CD8-positive, alpha-beta T cell (primary cell): ENCODE measurements at regions of chr1 and their contacts with region 1.

Region 1: DNA sequence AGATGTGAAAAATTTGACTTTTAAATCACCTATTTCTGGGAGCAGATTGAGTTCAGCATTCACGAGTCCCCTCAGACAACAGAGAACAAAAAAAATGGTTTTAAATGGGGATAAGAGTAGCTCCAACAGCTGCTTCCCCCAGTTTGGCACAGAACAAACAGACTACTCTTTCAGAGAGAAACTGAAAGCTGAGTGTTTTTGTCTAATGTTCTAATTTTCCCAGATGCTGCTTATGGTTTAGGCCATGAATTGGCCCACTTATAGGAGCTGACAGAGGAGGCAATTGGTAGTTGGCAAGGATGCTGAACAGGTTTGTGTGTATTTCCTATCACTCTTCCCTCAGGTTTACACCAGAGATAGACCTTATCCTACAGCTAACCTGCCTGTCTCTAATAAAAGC is 1637.4 kb upstream of the PRMT6 start:
- DNase-seq: no peak
- ATAC-seq: no peak
- H3K4me3 ChIP-seq: no peak overlapping the region
- H3K4me3 Mint-ChIP-seq: no peak overlapping the region
- H3K27ac ChIP-seq: no peak overlapping the region
- H3K27ac Mint-ChIP-seq: no peak overlapping the region
- H3K4me1 ChIP-seq: no peaks in the 10 kb centered on the region
- H3K4me1 Mint-ChIP-seq: no peaks in the 10 kb centered on the region
- H3K27me3 ChIP-seq: no peaks in the 10 kb centered on the region
- H3K27me3 Mint-ChIP-seq: no peaks in the 10 kb centered on the region
- CTCF ChIP-seq: no peak

Region 2: GRCh38 chr1:105398909-105399308 is 20.1 kb before region 1 on chr1:
- CTCF ChIA-PET with region 1: no interaction called
- POLR2A ChIA-PET with region 1: no interaction called
- intact Hi-C with region 1: no loop called
- DNase-seq: no peak
- ATAC-seq: no peak
- H3K4me3 ChIP-seq: no peak overlapping the region
- H3K4me3 Mint-ChIP-seq: no peak overlapping the region
- H3K27ac ChIP-seq: no peak overlapping the region
- H3K27ac Mint-ChIP-seq: no peak overlapping the region
- H3K4me1 ChIP-seq: no peaks in the 10 kb centered on the region
- H3K4me1 Mint-ChIP-seq: no peaks in the 10 kb centered on the region
- H3K27me3 ChIP-seq: no peaks in the 10 kb centered on the region
- H3K27me3 Mint-ChIP-seq: no peaks in the 10 kb centered on the region
- CTCF ChIP-seq: no peak

Region 3: GRCh38 chr1:105462308-105462707 is 43.3 kb after region 1 on chr1:
- CTCF ChIA-PET with region 1: no interaction called
- POLR2A ChIA-PET with region 1: no interaction called
- intact Hi-C with region 1: loop called in 1 of 2 experiments (anchors 1 kb)
- DNase-seq: no peak
- ATAC-seq: no peak
- H3K4me3 ChIP-seq: no peak overlapping the region
- H3K4me3 Mint-ChIP-seq: no peak overlapping the region
- H3K27ac ChIP-seq: no peak overlapping the region
- H3K27ac Mint-ChIP-seq: no peak overlapping the region
- H3K4me1 ChIP-seq: no peaks in the 10 kb centered on the region
- H3K4me1 Mint-ChIP-seq: no peaks in the 10 kb centered on the region
- H3K27me3 ChIP-seq: no peaks in the 10 kb centered on the region
- H3K27me3 Mint-ChIP-seq: no peaks in the 10 kb centered on the region
- CTCF ChIP-seq: no peak